Activated CD4-positive, alpha-beta memory T cell treated with anti-CD3 and anti-CD28 coated beads for 36 hours (primary cell): ENCODE measurements at regions of chr9 and their contacts with region 1.

Region 1: GRCh38 chr9:87535817-87536539 is 38.3 kb downstream of the DAPK1 start:
- DNase-seq: peak; percentile 59
- H3K4me3 Mint-ChIP-seq: no peak overlapping the region
- H3K27ac Mint-ChIP-seq: peak overlapping the region; percentile 81
- H3K4me1 Mint-ChIP-seq: peaks cover 10% of the 10 kb centered on the region
- H3K27me3 Mint-ChIP-seq: no peaks in the 10 kb centered on the region

Region 2: GRCh38 chr9:87375397-87376073 is 160.4 kb before region 1 on chr9:
- CTCF ChIA-PET with region 1: no interaction called
- POLR2A ChIA-PET with region 1: interaction called, 3 read pairs
- intact Hi-C with region 1: loop called (anchors 1 kb)
- DNase-seq: no peak
- H3K4me3 Mint-ChIP-seq: no peak overlapping the region
- H3K27ac Mint-ChIP-seq: no peak overlapping the region
- H3K4me1 Mint-ChIP-seq: peaks cover 10% of the 10 kb centered on the region
- H3K27me3 Mint-ChIP-seq: peaks cover 27% of the 10 kb centered on the region

Region 3: GRCh38 chr9:87464110-87464965 is 71.6 kb before region 1 on chr9:
- CTCF ChIA-PET with region 1: interaction called, 3 read pairs
- POLR2A ChIA-PET with region 1: no interaction called
- intact Hi-C with region 1: loop called (anchors 1 kb)
- DNase-seq: peak; percentile 64
- H3K4me3 Mint-ChIP-seq: no peak overlapping the region
- H3K27ac Mint-ChIP-seq: peak overlapping the region; percentile 75
- H3K4me1 Mint-ChIP-seq: peaks cover 16% of the 10 kb centered on the region
- H3K27me3 Mint-ChIP-seq: no peaks in the 10 kb centered on the region

Region 4: GRCh38 chr9:87500491-87501270 is 35.3 kb before region 1 on chr9:
- CTCF ChIA-PET with region 1: no interaction called
- POLR2A ChIA-PET with region 1: no interaction called
- intact Hi-C with region 1: loop called (anchors 1 kb)
- DNase-seq: peak; percentile 50
- H3K4me3 Mint-ChIP-seq: no peak overlapping the region
- H3K27ac Mint-ChIP-seq: no peak overlapping the region
- H3K4me1 Mint-ChIP-seq: peaks cover 23% of the 10 kb centered on the region
- H3K27me3 Mint-ChIP-seq: peaks cover 48% of the 10 kb centered on the region

Region 5: DNA sequence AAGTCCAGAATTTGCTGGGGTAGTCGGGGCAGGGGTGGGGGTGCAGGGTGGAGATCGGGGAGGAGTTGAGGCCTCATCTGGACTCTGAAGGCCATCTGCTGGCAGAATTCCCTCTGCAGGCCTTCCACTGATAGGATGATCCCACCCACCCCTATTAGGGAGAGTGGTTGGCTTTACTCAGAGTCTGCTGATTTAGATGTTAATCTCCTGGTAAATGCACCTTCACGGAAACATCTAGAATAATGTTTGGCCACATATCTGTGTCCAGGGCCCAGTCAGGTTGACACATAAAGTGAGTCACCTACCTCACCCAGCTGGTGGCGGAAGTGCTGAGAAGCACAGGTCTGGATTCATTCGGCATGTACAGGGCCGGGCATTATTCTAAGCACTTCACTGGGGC is 11.7 kb after region 1 on chr9:
- CTCF ChIA-PET with region 1: no interaction called
- POLR2A ChIA-PET with region 1: no interaction called
- intact Hi-C with region 1: no loop called
- DNase-seq: no peak
- H3K4me3 Mint-ChIP-seq: no peak overlapping the region
- H3K27ac Mint-ChIP-seq: no peak overlapping the region
- H3K4me1 Mint-ChIP-seq: no peaks in the 10 kb centered on the region
- H3K27me3 Mint-ChIP-seq: peaks cover 7% of the 10 kb centered on the region

Region 6: DNA sequence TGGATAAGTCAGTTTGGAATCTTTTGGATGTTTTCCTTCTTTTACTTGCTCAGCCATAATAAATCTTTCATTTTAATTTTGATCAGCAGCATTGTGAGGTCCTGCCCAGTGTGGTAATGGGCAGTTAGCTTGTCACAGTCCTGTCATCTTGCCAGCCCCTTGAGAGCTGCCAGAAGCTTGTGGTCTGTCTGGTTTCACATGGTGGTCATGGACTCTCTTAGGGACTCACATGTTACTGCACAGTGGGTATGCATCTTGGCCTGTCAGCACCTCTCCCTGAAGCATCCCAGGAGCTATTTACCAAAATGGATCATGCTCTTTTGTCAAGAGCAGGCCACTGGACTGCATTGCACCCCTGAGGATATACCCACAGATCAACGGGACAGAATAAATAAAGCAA is 22.0 kb after region 1 on chr9:
- CTCF ChIA-PET with region 1: interaction called, 3 read pairs
- POLR2A ChIA-PET with region 1: no interaction called
- intact Hi-C with region 1: loop called (anchors 1 kb)
- DNase-seq: no peak
- H3K4me3 Mint-ChIP-seq: no peak overlapping the region
- H3K27ac Mint-ChIP-seq: no peak overlapping the region
- H3K4me1 Mint-ChIP-seq: peaks cover 3% of the 10 kb centered on the region
- H3K27me3 Mint-ChIP-seq: peaks cover 11% of the 10 kb centered on the region